A673 (cell line): ENCODE measurements at regions of chr9 and their contacts with region 1.

Region 1: GRCh38 chr9:130847327-130848217 is 12.5 kb downstream of the ABL1 start:
- DNase-seq: peak; percentile 94
- H3K4me3 ChIP-seq: peak overlapping the region; percentile 5
- H3K27ac ChIP-seq: peak overlapping the region; percentile 88
- H3K4me1 ChIP-seq: peaks cover 74% of the 10 kb centered on the region
- H3K27me3 ChIP-seq: no peaks in the 10 kb centered on the region
- CTCF ChIP-seq: peak; percentile 49

Region 2: GRCh38 chr9:130712564-130713285 is 134.8 kb before region 1 on chr9:
- CTCF ChIA-PET with region 1: no interaction called
- POLR2A ChIA-PET with region 1: no interaction called
- intact Hi-C with region 1: loop called (anchors 5 kb)
- DNase-seq: peak; percentile 99
- H3K4me3 ChIP-seq: peak overlapping the region; percentile 97
- H3K27ac ChIP-seq: peak overlapping the region; percentile 98
- H3K4me1 ChIP-seq: no peaks in the 10 kb centered on the region
- H3K27me3 ChIP-seq: no peaks in the 10 kb centered on the region
- CTCF ChIP-seq: no peak

Region 3: GRCh38 chr9:130997925-130998596 is 150.5 kb after region 1 on chr9:
- CTCF ChIA-PET with region 1: no interaction called
- POLR2A ChIA-PET with region 1: no interaction called
- intact Hi-C with region 1: no loop called
- DNase-seq: peak; percentile 72
- H3K4me3 ChIP-seq: no peak overlapping the region
- H3K27ac ChIP-seq: no peak overlapping the region
- H3K4me1 ChIP-seq: peaks cover 5% of the 10 kb centered on the region
- H3K27me3 ChIP-seq: peaks cover 7% of the 10 kb centered on the region
- CTCF ChIP-seq: peak; percentile 83